ENCODE measurements at regions of chr6 and their contacts with region 1.

Region 1: GRCh38 chr6:115706330-115706729 is 354.4 kb downstream of the FRK start:
- DNase-seq: no peak
- ATAC-seq: no peak
- H3K4me3 ChIP-seq: no peak overlapping the region
- H3K27ac ChIP-seq: no peak overlapping the region
- H3K4me1 ChIP-seq: no peaks in the 10 kb centered on the region
- H3K27me3 ChIP-seq: no peaks in the 10 kb centered on the region
- CTCF ChIP-seq: no peak

Region 2: DNA sequence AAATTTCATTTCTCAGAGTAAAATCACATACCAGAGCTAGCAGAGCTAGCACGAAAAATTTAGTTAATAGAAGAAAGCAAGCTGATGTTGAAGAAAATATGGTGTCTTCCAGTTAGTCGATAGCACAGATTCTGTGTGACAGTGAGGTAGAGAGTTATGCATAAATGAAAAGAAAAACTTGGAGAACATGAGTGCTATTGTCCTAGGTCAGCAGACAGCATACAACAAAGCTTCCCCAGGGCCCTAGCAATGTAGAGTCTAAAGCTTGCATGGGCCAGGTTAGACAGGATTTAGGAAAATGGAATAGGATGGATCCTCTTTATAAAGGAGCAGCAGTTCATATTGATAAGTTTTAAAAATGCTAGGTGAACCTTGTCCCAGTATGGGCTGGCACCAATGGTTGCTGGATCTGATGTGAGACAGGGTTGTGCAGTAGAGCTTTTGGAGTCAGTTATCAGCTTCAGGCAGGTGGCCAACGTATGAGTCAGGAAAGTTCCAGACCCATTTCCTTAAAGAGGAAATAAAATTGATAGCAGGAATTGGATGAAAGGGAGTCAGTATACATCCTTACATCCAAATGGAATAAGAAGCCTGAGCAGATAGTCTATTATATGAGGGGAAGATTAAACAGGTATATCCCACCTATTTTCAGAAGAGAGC is 77.2 kb after region 1 on chr6:
- CTCF ChIA-PET with region 1: no interaction called
- POLR2A ChIA-PET with region 1: interaction called, 10 read pairs
- intact Hi-C with region 1: no loop called
- DNase-seq: peak; percentile 43
- ATAC-seq: no peak
- H3K4me3 ChIP-seq: no peak overlapping the region
- H3K27ac ChIP-seq: no peak overlapping the region
- H3K4me1 ChIP-seq: no peaks in the 10 kb centered on the region
- H3K27me3 ChIP-seq: no peaks in the 10 kb centered on the region; the same call in 1 of the 2 replicates
- CTCF ChIP-seq: no peak

Measured in PC-3 (cell line).